ENCODE measurements at regions of chr7 and their contacts with region 1.

Region 1: GRCh38 chr7:128425850-128426249 is 16.1 kb upstream of the IMPDH1 start:
- DNase-seq: peak; percentile 93
- H3K4me3 Mint-ChIP-seq: no peak overlapping the region
- H3K27ac Mint-ChIP-seq: no peak overlapping the region
- H3K4me1 Mint-ChIP-seq: no peaks in the 10 kb centered on the region
- H3K27me3 Mint-ChIP-seq: peaks cover 3% of the 10 kb centered on the region

Region 2: DNA sequence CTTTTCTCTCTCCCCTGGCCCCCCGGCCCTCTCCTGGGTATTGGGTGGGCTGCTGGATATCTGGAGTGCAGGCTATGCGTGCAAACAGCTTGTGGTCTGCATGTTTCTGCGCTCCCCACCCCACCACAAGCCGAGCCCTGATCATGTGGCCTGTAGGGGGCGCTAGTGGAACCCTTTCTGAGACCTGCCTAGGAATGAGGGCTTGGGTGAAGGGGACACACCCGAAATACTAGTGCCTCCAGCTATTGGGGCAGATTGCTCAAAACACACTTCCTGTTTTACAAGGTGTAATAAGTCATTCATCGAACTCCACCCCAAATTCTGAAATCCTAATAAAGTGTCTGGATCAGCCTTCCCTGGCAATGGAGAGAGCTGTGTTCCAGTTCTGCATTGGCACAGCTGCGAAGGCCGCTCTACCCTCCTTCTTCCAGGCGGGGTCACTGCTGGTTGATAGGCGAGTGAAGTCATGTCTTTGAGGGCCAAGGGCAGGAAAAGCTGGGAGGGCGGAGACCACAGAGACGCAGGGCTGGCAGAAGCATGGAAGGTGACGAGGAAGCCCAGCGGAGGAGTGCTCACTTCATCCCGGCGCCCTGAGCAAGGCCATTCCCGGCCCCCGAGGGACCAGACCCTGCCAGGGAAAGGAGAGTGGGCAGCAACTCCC is 44.6 kb before region 1 on chr7:
- CTCF ChIA-PET with region 1: interaction called, 49 read pairs
- intact Hi-C with region 1: loop called (anchors 5 kb)
- DNase-seq: peak; percentile 61
- H3K4me3 Mint-ChIP-seq: no peak overlapping the region
- H3K27ac Mint-ChIP-seq: no peak overlapping the region
- H3K4me1 Mint-ChIP-seq: no peaks in the 10 kb centered on the region
- H3K27me3 Mint-ChIP-seq: no peaks in the 10 kb centered on the region

Region 3: GRCh38 chr7:128398016-128398840 is 27.6 kb before region 1 on chr7:
- CTCF ChIA-PET with region 1: interaction called, 159 read pairs
- intact Hi-C with region 1: loop called (anchors 1 kb)
- DNase-seq: peak; percentile 65
- H3K4me3 Mint-ChIP-seq: no peak overlapping the region
- H3K27ac Mint-ChIP-seq: no peak overlapping the region
- H3K4me1 Mint-ChIP-seq: peaks cover 7% of the 10 kb centered on the region
- H3K27me3 Mint-ChIP-seq: no peaks in the 10 kb centered on the region

Region 4: DNA sequence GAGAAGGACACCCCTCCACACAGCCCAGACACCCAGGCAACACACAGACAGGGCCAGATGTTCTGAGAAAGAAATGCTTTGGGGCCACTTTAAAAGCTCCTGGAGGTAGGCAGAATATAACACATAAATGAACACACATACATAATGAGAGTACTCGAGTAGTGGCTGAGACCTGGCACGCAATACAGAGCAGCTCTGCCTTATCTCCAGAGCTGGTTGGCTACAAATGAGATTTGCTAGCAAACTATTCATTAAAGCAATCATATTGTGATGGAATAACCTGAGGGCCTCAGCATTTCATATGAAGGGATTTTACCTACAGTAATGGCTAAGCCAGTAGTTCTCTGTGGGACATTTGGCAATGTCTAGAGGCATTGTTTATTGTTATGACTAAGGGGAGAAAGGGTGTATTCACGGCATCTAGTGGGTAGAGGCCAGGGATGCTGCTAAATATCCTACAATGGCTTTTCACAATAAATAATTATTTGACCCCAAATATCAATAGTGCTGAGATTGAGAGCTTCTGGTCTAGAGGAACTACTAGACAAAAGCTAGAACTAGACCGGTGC is 10.5 kb before region 1 on chr7:
- CTCF ChIA-PET with region 1: interaction called, 100 read pairs
- intact Hi-C with region 1: no loop called
- DNase-seq: no peak
- H3K4me3 Mint-ChIP-seq: no peak overlapping the region
- H3K27ac Mint-ChIP-seq: no peak overlapping the region
- H3K4me1 Mint-ChIP-seq: peaks cover 2% of the 10 kb centered on the region
- H3K27me3 Mint-ChIP-seq: peaks cover 2% of the 10 kb centered on the region

Region 5: DNA sequence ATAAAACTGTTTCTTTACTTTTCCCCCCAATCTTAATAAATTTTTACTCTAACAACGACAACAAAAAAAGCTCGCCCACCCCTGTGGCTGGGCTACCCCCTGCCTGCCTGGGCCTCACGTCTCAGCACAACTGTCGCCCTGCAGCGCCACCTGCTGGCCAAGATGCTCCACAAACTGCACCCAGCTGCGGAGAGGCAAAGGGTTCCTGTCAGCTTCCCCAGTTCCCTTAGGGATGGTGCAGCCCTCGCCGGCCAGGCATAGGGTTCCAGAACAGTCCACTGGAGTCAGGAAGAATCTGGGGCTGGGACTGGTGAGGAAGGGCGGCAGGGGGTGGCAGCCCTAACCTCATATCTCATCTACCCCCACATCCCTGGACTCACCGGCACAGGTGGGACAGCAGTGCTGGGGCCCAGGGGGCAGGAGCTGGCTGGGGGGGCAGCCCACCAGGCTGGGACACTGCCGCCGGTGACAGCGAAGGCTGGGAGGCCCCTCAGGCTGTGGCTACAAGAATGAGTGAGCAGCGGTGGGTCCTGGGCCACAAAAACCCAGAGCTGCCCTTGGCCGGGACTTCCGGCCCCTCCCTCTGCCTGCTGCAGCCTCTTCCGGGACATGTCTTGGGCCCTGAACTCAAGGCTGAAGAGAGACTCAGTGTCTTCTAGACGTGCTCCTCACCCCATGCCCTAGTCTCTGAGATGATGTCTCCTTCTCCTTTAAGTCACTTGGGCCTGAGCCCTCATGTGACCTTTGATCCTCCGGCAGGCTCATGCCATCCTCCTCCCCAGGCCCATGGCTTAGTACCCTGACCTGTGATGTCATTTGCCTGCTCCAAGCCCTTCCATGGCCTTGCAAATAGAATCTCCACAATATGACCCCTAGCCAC is 458.0 kb after region 1 on chr7:
- CTCF ChIA-PET with region 1: interaction called, 9 read pairs
- intact Hi-C with region 1: loop called (anchors 5 kb)
- DNase-seq: peak; percentile 90
- H3K4me3 Mint-ChIP-seq: no peak overlapping the region
- H3K27ac Mint-ChIP-seq: no peak overlapping the region
- H3K4me1 Mint-ChIP-seq: no peaks in the 10 kb centered on the region
- H3K27me3 Mint-ChIP-seq: peaks cover 3% of the 10 kb centered on the region

Region 6: DNA sequence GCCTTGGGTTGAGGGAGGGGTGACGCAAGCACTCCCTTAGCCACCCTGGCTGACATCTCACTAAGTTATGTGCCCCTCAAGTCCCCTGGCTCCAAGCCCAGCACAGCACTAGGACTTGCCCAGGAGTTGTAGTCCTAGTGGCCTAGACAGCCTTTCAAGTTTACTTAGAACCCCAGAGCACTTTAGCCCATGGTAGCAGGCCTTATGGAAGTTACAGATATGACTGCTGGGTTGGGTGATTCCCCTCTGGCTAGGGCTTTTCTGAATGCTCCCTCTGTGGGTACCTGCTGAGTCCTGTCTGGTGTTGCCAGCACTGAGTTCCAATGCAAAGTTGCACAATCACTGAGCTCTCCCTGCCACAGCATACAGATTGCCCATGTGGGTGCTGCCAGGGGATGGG is 882.2 kb after region 1 on chr7:
- CTCF ChIA-PET with region 1: no interaction called
- intact Hi-C with region 1: no loop called
- DNase-seq: no peak
- H3K4me3 Mint-ChIP-seq: no peak overlapping the region
- H3K27ac Mint-ChIP-seq: no peak overlapping the region
- H3K4me1 Mint-ChIP-seq: peaks cover 1% of the 10 kb centered on the region
- H3K27me3 Mint-ChIP-seq: no peaks in the 10 kb centered on the region

Measured in activated naive CD4-positive, alpha-beta T cell treated with anti-CD3 and anti-CD28 coated beads for 36 hours (primary cell).